Activated CD4-positive, alpha-beta T cell treated with anti-CD3 and anti-CD28 coated beads for 36 hours (primary cell): ENCODE measurements at regions of chr22 and their contacts with region 1.

Region 1: DNA sequence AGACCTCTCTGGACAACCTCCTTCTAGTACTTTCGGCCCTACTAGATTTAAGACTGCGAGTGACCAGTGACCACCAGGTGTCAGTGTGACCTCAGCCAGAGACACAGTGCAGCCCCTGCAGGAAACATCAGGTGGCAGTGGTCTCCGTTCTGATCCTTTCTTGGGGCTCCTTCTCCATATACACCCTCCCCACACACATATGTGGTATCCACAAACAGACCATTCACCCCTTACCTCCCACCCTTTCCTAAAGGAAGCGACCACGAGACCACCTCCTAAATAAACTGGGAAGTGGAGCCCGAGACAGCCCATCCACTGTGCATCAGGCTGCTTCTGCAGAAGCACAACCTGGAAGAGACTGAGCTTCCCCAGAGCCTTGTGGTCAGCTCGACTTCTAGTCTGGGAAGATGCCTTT is 38.5 kb upstream of the CYP2D6 start:
- DNase-seq: peak; percentile 84
- ATAC-seq: peak; percentile 92
- H3K4me3 Mint-ChIP-seq: no peak overlapping the region
- H3K27ac Mint-ChIP-seq: no peak overlapping the region
- H3K4me1 Mint-ChIP-seq: peaks cover 22% of the 10 kb centered on the region
- H3K27me3 Mint-ChIP-seq: no peaks in the 10 kb centered on the region

Region 2: GRCh38 chr22:41857155-41857859 is 311.8 kb before region 1 on chr22:
- CTCF ChIA-PET with region 1: no interaction called
- POLR2A ChIA-PET with region 1: no interaction called
- intact Hi-C with region 1: no loop called
- DNase-seq: peak; percentile 89
- ATAC-seq: peak; percentile 71
- H3K4me3 Mint-ChIP-seq: no peak overlapping the region
- H3K27ac Mint-ChIP-seq: peak overlapping the region; percentile 95
- H3K4me1 Mint-ChIP-seq: peaks cover 76% of the 10 kb centered on the region
- H3K27me3 Mint-ChIP-seq: no peaks in the 10 kb centered on the region

Region 3: GRCh38 chr22:42313804-42314581 is 144.9 kb after region 1 on chr22:
- CTCF ChIA-PET with region 1: interaction called, 4 read pairs
- POLR2A ChIA-PET with region 1: no interaction called
- intact Hi-C with region 1: loop called in 1 of 2 experiments (anchors 1 kb)
- DNase-seq: peak; percentile 68
- ATAC-seq: peak; percentile 78
- H3K4me3 Mint-ChIP-seq: no peak overlapping the region
- H3K27ac Mint-ChIP-seq: no peak overlapping the region
- H3K4me1 Mint-ChIP-seq: peaks cover 46% of the 10 kb centered on the region
- H3K27me3 Mint-ChIP-seq: no peaks in the 10 kb centered on the region

Region 4: GRCh38 chr22:42340829-42341383 is 171.8 kb after region 1 on chr22:
- CTCF ChIA-PET with region 1: no interaction called
- POLR2A ChIA-PET with region 1: no interaction called
- intact Hi-C with region 1: no loop called
- DNase-seq: no peak
- ATAC-seq: no peak
- H3K4me3 Mint-ChIP-seq: no peak overlapping the region
- H3K27ac Mint-ChIP-seq: no peak overlapping the region
- H3K4me1 Mint-ChIP-seq: peaks cover 9% of the 10 kb centered on the region
- H3K27me3 Mint-ChIP-seq: no peaks in the 10 kb centered on the region